CD4-positive, alpha-beta T cell (primary cell): ENCODE measurements at regions of chr15 and their contacts with region 1.

Region 1: GRCh38 chr15:45022871-45023658 is at the start of gene SORD:
- DNase-seq: peak; percentile 76 to 98 (median 90)
- ATAC-seq: peak; percentile 99
- H3K4me3 ChIP-seq: peak within 1 kb of the TSS; percentile 92
- H3K4me3 Mint-ChIP-seq: peak within 1 kb of the TSS; percentile 87
- H3K27ac ChIP-seq: no peak within 1 kb of the TSS
- H3K27ac Mint-ChIP-seq: peak within 1 kb of the TSS; percentile 2
- H3K4me1 ChIP-seq: peaks cover 18% of the 10 kb centered on the region
- H3K4me1 Mint-ChIP-seq: peaks cover 22% of the 10 kb centered on the region
- H3K27me3 ChIP-seq: no peaks in the 10 kb centered on the region
- H3K27me3 Mint-ChIP-seq: peaks cover 22% of the 10 kb centered on the region
- CTCF ChIP-seq: no peak
- total RNA-seq, gene SORD: 1.7 to 1.8 TPM

Region 2: DNA sequence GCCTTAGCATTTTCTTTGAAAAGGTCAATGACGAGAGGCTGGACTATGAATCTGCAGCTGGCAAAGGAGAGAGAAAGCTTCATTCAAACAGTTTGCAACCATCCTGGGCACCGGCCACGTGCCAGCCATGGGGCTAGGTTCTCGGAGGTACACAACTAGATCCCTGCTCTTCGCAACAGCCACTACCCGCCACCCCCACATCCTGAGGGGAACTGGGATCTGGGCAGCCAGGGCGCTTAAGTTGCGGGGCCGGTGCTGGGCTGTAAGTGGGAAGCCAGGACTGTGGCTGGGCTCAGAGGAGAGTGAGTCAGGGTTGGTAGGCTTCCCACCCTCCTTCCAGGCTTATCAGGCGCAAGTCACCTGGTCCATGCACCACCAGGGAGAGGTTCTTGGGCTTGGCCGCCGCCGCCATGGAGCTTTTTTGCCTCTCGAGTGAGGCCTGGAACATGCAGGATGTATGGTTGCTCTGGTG is 161.6 kb before region 1 on chr15:
- CTCF ChIA-PET with region 1: no interaction called
- POLR2A ChIA-PET with region 1: no interaction called
- intact Hi-C with region 1: loop called in 1 of 2 experiments (anchors 1 kb)
- DNase-seq: no peak
- ATAC-seq: no peak
- H3K4me3 ChIP-seq: no peak overlapping the region
- H3K4me3 Mint-ChIP-seq: no peak overlapping the region
- H3K27ac ChIP-seq: no peak overlapping the region
- H3K27ac Mint-ChIP-seq: no peak overlapping the region
- H3K4me1 ChIP-seq: no peaks in the 10 kb centered on the region
- H3K4me1 Mint-ChIP-seq: no peaks in the 10 kb centered on the region
- H3K27me3 ChIP-seq: no peaks in the 10 kb centered on the region
- H3K27me3 Mint-ChIP-seq: peaks cover 1% of the 10 kb centered on the region
- CTCF ChIP-seq: no peak

Region 3: DNA sequence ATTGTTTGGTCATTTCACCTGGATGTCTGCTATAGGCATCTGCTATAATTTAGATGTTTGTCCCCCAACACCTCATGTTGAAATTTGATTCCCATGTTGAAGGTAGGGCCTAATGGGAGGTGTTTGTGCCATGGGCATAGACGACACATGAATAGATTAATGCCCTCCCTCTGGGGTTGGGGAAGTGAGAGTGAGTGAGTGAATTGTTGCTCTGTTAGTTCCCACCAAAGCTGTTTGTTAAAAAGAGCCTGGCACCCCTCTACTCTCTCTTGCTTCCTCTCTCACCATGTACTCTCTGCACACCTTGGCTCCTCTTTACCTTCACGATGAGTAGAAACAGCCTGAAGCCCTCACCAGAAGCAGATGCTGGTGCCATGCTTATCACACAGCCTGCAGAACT is 24.0 kb before region 1 on chr15:
- CTCF ChIA-PET with region 1: no interaction called
- POLR2A ChIA-PET with region 1: no interaction called
- intact Hi-C with region 1: no loop called
- DNase-seq: no peak
- ATAC-seq: no peak
- H3K4me3 ChIP-seq: no peak overlapping the region
- H3K4me3 Mint-ChIP-seq: no peak overlapping the region
- H3K27ac ChIP-seq: no peak overlapping the region
- H3K27ac Mint-ChIP-seq: no peak overlapping the region
- H3K4me1 ChIP-seq: no peaks in the 10 kb centered on the region
- H3K4me1 Mint-ChIP-seq: no peaks in the 10 kb centered on the region
- H3K27me3 ChIP-seq: no peaks in the 10 kb centered on the region
- H3K27me3 Mint-ChIP-seq: peaks cover 7% of the 10 kb centered on the region
- CTCF ChIP-seq: no peak

Region 4: GRCh38 chr15:45094358-45094730 is 71.3 kb after region 1 on chr15:
- CTCF ChIA-PET with region 1: no interaction called
- POLR2A ChIA-PET with region 1: no interaction called
- intact Hi-C with region 1: no loop called
- DNase-seq: no peak
- ATAC-seq: no peak
- H3K4me3 ChIP-seq: no peak overlapping the region
- H3K4me3 Mint-ChIP-seq: no peak overlapping the region
- H3K27ac ChIP-seq: no peak overlapping the region
- H3K27ac Mint-ChIP-seq: no peak overlapping the region
- H3K4me1 ChIP-seq: no peaks in the 10 kb centered on the region
- H3K4me1 Mint-ChIP-seq: no peaks in the 10 kb centered on the region
- H3K27me3 ChIP-seq: peaks cover 0 to 10% of the 10 kb centered on the region in 2 experiments
- H3K27me3 Mint-ChIP-seq: peaks cover 13% of the 10 kb centered on the region
- CTCF ChIP-seq: no peak

Region 5: DNA sequence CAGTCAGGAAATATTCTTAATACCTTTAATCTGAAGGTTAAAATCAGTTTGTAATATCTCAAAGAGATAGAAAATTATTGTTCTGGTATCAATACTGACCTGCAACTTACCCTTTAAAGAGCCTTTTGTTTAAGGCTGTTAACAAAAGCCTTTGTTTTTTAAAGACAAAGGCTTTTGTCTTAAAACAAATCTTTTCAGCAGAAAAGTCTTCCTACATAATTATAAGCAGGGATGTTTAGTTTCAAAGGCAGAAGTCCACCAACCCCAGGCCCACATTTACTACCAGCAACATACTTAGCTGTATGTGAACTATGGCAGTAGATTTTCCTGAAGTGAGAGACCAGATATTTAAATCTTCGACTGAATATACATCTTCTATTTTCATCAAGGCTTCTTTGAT is 463.3 kb after region 1 on chr15:
- CTCF ChIA-PET with region 1: no interaction called
- POLR2A ChIA-PET with region 1: no interaction called
- intact Hi-C with region 1: no loop called
- DNase-seq: no peak
- ATAC-seq: no peak
- H3K4me3 ChIP-seq: no peak overlapping the region
- H3K4me3 Mint-ChIP-seq: no peak overlapping the region
- H3K27ac ChIP-seq: no peak overlapping the region
- H3K27ac Mint-ChIP-seq: no peak overlapping the region
- H3K4me1 ChIP-seq: no peaks in the 10 kb centered on the region
- H3K4me1 Mint-ChIP-seq: no peaks in the 10 kb centered on the region
- H3K27me3 ChIP-seq: no peaks in the 10 kb centered on the region
- H3K27me3 Mint-ChIP-seq: no peaks in the 10 kb centered on the region
- CTCF ChIP-seq: no peak